ENCODE measurements at regions of chr11 and their contacts with region 1.

Region 1: DNA sequence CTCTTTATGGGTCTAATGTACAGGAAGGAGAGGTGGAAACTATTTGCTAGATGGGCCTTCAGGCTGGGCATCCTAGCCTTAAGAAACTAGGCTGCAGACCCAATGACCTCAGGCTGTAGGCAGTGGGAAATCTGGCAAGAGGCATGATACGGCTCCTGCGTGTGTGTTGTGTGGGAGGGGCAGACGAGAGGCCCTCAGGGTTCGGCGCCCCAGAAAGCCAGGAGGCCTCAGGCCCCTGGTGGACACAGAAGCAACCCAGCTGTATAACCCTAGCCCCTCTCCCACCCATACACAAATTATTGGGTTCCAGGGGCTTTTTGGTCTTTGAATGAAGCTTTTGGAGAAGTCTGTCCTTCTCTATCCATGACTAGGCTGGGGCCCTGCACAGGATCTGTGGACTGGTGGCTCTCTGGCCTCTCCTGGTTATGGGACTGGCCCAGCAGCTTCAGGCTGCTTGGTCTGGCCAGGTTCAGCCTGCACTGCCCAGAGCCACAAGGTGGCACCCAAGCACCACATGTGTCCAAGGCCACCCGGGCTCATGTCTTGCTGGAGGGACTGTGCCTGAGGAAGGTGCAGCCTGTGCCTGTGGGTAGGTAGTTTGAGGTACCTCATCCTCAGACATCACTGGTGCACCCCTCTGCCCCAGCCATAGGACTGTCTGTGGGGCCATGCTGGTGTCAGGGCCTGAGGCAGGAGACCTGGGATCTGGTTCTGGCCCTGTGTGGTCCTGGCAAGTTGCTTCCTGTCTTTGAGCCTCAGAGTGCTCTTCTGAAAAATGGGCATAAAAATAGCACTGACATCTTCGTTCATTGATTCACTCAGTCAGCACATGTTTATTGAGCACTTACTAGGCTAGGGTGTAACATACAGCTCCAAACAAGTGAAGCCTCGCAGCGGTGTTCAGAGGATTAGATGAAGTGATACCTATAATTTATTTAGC is 87.5 kb downstream of the RRM1 start:
- DNase-seq: peak; percentile 49
- ATAC-seq: peak; percentile 88
- H3K4me3 ChIP-seq: no peak overlapping the region
- H3K27ac ChIP-seq: no peak overlapping the region
- H3K4me1 ChIP-seq: no peaks in the 10 kb centered on the region; the same call in 1 of the 2 replicates
- H3K27me3 ChIP-seq: no peaks in the 10 kb centered on the region
- CTCF ChIP-seq: peak; percentile 64
- POLR2A ChIP-seq: no peak
- RAD21 ChIP-seq: peak; percentile 72

Region 2: GRCh38 chr11:4539603-4540219 is 357.7 kb after region 1 on chr11:
- CTCF ChIA-PET with region 1: interaction called, 28 read pairs
- POLR2A ChIA-PET with region 1: no interaction called
- dilution Hi-C with region 1: no loop called
- in situ Hi-C with region 1: loop called (anchors 5 kb)
- intact Hi-C with region 1: loop called (anchors 1 kb)
- DNase-seq: peak; percentile 29
- ATAC-seq: peak; percentile 95
- H3K4me3 ChIP-seq: no peak overlapping the region
- H3K27ac ChIP-seq: no peak overlapping the region
- H3K4me1 ChIP-seq: no peaks in the 10 kb centered on the region
- H3K27me3 ChIP-seq: no peaks in the 10 kb centered on the region
- CTCF ChIP-seq: peak; percentile 68
- POLR2A ChIP-seq: no peak
- RAD21 ChIP-seq: peak; percentile 50; the same call in 1 of the 2 replicates

Measured in IMR-90 (cell line).